SK-N-SH (cell line): ENCODE measurements at regions of chr9 and their contacts with region 1.

Region 1: GRCh38 chr9:131334629-131335367 is 45.3 kb downstream of the PLPP7 start:
- DNase-seq: no peak
- H3K4me3 ChIP-seq: no peak overlapping the region
- H3K27ac ChIP-seq: no peak overlapping the region
- H3K4me1 ChIP-seq: peaks cover 0 to 6% of the 10 kb centered on the region in 2 experiments; a peak in 1 of 4 replicates
- H3K27me3 ChIP-seq: no peaks in the 10 kb centered on the region
- CTCF ChIP-seq: no peak
- EP300 ChIP-seq: no peak
- RAD21 ChIP-seq: no peak

Region 2: GRCh38 chr9:131167146-131167692 is 167.6 kb before region 1 on chr9:
- CTCF ChIA-PET with region 1: interaction called, 29 read pairs
- POLR2A ChIA-PET with region 1: no interaction called
- DNase-seq: no peak
- H3K4me3 ChIP-seq: no peak overlapping the region
- H3K27ac ChIP-seq: no peak overlapping the region
- H3K4me1 ChIP-seq: no peaks in the 10 kb centered on the region
- H3K27me3 ChIP-seq: no peaks in the 10 kb centered on the region
- CTCF ChIP-seq: no peak
- EP300 ChIP-seq: no peak
- RAD21 ChIP-seq: no peak

Region 3: GRCh38 chr9:131191857-131192256 is 142.9 kb before region 1 on chr9:
- CTCF ChIA-PET with region 1: interaction called, 28 read pairs
- POLR2A ChIA-PET with region 1: no interaction called
- DNase-seq: no peak
- H3K4me3 ChIP-seq: no peak overlapping the region
- H3K27ac ChIP-seq: no peak overlapping the region
- H3K4me1 ChIP-seq: no peaks in the 10 kb centered on the region
- H3K27me3 ChIP-seq: no peaks in the 10 kb centered on the region
- CTCF ChIP-seq: no peak
- EP300 ChIP-seq: no peak
- RAD21 ChIP-seq: no peak

Region 4: GRCh38 chr9:131214286-131214856 is 120.4 kb before region 1 on chr9:
- CTCF ChIA-PET with region 1: interaction called, 17 read pairs
- POLR2A ChIA-PET with region 1: no interaction called
- DNase-seq: no peak
- H3K4me3 ChIP-seq: no peak overlapping the region
- H3K27ac ChIP-seq: no peak overlapping the region
- H3K4me1 ChIP-seq: no peaks in the 10 kb centered on the region
- H3K27me3 ChIP-seq: no peaks in the 10 kb centered on the region
- CTCF ChIP-seq: no peak
- EP300 ChIP-seq: no peak
- RAD21 ChIP-seq: no peak

Region 5: DNA sequence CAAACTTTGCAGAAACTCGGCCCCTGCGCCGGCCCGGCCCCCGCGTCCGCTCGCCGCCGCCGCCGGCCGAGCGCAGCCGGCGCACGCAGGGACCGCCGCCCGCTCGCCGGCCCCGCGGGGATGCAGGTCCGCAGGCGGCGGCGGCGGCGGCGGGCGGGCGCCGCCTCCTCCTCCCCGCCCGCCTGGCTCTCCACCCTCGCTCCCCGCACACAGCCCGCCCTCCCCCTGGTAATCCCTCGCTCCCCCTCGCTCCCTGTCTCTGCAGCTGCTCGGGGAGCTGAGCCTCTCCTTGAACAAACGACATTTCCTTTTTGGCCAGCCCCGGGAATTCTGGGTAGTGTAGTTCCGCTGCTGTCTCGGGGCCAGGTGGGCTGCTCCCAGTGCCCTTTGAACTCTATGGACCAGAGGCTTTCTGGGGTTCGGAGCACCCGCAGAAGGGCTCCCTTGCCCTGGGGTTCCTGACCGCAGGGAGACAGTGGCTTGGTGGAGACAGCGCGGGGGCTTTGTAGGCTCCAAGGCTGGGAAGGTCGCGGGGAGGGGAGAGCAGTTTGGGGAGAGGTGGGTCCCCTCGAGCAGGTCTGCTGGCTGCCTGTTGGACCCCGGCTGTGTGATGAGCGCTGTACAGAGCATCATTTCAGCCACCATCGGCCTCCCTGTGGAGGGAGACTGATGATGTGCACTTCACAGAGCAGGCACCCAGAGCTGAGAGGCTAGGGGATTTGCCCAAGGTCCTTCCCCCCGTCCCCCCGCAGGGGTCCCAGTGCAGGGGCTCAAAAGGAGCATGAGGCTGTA is 56.7 kb before region 1 on chr9:
- CTCF ChIA-PET with region 1: interaction called, 13 read pairs
- POLR2A ChIA-PET with region 1: interaction called, 3 read pairs
- DNase-seq: peak; percentile 99
- H3K4me3 ChIP-seq: peak overlapping the region; percentile 58 to 67
- H3K27ac ChIP-seq: no peak overlapping the region; a peak in 1 of 4 replicates
- H3K4me1 ChIP-seq: peaks cover 0 to 4% of the 10 kb centered on the region in 2 experiments; a peak in 1 of 4 replicates
- H3K27me3 ChIP-seq: peaks cover 7% of the 10 kb centered on the region; the same call in 1 of the 2 replicates
- CTCF ChIP-seq: no peak
- EP300 ChIP-seq: no peak
- RAD21 ChIP-seq: no peak

Region 6: DNA sequence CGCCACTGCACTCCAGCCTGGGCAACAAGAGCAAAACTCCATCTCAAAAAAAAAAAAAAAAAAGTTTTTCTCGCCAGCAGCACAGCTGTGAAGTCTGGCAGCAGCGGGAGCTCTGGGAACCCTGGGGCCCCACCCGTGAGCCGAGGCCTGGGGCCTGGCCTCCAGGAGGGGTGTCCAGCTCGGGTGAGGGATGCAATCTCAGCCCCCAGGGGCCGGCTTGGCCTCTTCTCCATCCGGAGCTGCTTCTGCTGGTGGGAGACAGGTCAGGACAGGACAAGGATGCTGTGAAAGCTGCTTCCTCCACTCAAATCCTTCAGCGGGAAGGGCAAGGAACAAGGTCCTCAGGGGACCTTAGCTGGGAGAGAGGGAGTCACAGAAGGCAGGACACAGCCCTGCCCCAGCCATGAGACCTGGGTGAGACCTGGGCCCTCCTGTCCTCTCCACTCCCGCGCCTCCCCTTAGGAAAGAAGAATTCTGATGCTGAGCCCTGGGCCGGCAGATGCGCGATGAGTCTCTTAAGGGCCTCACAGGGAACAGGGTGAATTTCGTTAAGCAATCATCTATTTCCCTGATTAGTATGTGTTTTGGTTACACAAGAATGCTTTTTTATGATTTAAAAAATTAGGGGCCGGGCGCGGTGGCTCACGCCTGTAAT is 14.6 kb before region 1 on chr9:
- CTCF ChIA-PET with region 1: interaction called, 43 read pairs
- POLR2A ChIA-PET with region 1: no interaction called
- DNase-seq: peak; percentile 58
- H3K4me3 ChIP-seq: no peak overlapping the region
- H3K27ac ChIP-seq: no peak overlapping the region
- H3K4me1 ChIP-seq: peaks cover 0 to 9% of the 10 kb centered on the region in 2 experiments; a peak in 1 of 4 replicates
- H3K27me3 ChIP-seq: no peaks in the 10 kb centered on the region
- CTCF ChIP-seq: no peak
- EP300 ChIP-seq: no peak
- RAD21 ChIP-seq: no peak

Region 7: GRCh38 chr9:131500939-131501541 is 166.2 kb after region 1 on chr9:
- CTCF ChIA-PET with region 1: no interaction called
- POLR2A ChIA-PET with region 1: no interaction called
- DNase-seq: no peak
- H3K4me3 ChIP-seq: no peak overlapping the region
- H3K27ac ChIP-seq: no peak overlapping the region
- H3K4me1 ChIP-seq: peaks cover 3 to 16% of the 10 kb centered on the region in 2 experiments; a peak in 1 of 4 replicates
- H3K27me3 ChIP-seq: no peaks in the 10 kb centered on the region
- CTCF ChIP-seq: no peak
- EP300 ChIP-seq: no peak
- RAD21 ChIP-seq: no peak